Transverse colon (tissue), 4 donors: ENCODE measurements at regions of chr20 and their contacts with region 1.

Region 1: GRCh38 chr20:4607287-4607713 is 114.4 kb upstream of the PRND start:
- DNase-seq: peak; percentile 50
- H3K4me3 ChIP-seq: no peak overlapping the region
- H3K27ac ChIP-seq: no peak overlapping the region
- H3K4me1 ChIP-seq: peaks cover 0 to 31% (median 0%) of the 10 kb centered on the region in 4 donors
- H3K27me3 ChIP-seq: peaks cover 20% of the 10 kb centered on the region
- CTCF ChIP-seq: peak; percentile 92 to 99 (median 95)
- EP300 ChIP-seq: no peak
- POLR2A ChIP-seq: no peak

Region 2: DNA sequence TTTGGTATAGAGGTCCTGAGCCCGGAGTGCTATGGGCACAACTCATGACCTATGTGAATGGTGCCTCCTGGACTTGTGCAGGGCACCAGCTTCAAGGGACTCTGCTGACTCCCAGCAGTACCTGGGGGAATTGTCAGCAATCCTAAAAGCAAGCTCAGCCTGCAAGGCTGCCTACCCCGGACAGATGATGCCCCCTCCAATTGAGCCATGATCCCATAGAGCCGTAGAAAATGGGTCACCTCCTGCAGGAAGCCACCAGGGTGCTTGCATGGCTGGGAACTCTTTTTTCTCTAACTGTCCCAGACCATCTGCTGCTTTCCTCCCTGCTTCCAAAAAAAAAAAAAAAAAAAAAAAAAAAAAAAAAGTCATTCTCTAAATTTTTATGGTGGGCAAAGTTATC is 101.6 kb after region 1 on chr20:
- in situ Hi-C with region 1: no loop called
- intact Hi-C with region 1: no loop called
- DNase-seq: no peak
- H3K4me3 ChIP-seq: no peak overlapping the region
- H3K27ac ChIP-seq: no peak overlapping the region
- H3K4me1 ChIP-seq: peaks cover 0 to 2% (median 0%) of the 10 kb centered on the region in 4 donors
- H3K27me3 ChIP-seq: no peaks in the 10 kb centered on the region
- CTCF ChIP-seq: no peak
- EP300 ChIP-seq: no peak
- POLR2A ChIP-seq: no peak

Region 3: DNA sequence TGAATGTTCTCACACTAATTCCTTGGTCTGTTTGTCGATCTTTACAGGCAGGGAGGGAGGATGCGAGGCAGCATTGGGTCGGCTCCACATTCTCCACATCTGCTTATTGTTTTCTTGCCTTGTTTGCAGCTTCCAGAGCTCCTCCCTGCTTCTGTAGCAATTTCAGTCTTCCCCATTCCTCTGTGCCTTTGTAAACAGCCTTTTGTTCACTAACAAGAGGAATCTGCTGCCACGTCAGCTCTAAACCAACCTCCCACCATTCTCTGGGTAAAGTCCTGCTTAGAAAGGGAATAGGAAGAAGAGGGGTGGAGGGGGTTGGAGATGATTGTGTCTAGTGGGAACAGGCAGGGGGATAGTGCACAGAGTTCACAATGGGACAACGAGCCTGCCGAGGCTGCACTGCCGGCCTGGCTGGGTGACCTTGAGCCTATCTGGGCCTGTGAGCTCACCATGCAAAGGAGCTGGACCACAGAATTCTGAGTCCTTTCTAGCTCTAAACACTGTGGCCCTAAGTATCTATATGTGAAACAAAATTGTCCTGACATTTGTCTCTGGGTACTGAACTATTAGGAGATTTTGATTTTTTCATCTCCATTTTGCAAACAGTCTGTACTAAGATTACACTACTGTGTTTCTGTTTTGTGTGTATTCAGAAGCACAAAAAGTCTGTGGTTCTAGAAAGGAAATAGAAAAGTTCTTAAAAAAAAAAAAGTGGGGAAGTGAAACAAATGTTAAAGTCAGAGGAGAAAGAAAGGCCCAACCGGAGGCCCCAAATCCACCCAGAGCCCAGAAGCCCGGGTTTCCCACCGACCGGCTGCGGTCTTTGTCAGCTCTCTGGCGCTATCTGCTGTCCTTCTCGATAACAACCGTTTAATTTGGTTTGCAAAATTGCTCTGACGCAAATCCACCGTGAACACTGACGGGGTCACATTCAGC is 113.0 kb after region 1 on chr20:
- in situ Hi-C with region 1: loop called (anchors 5 to 10 kb)
- intact Hi-C with region 1: loop called (anchors 2 kb)
- DNase-seq: peak; percentile 83
- H3K4me3 ChIP-seq: no peak overlapping the region
- H3K27ac ChIP-seq: peak overlapping the region; percentile 56 to 81 (median 61)
- H3K4me1 ChIP-seq: peaks cover 0 to 4% (median 4%) of the 10 kb centered on the region in 4 donors
- H3K27me3 ChIP-seq: no peaks in the 10 kb centered on the region
- CTCF ChIP-seq: peak; percentile 64 to 81 (median 66)
- EP300 ChIP-seq: no peak
- POLR2A ChIP-seq: no peak

Region 4: DNA sequence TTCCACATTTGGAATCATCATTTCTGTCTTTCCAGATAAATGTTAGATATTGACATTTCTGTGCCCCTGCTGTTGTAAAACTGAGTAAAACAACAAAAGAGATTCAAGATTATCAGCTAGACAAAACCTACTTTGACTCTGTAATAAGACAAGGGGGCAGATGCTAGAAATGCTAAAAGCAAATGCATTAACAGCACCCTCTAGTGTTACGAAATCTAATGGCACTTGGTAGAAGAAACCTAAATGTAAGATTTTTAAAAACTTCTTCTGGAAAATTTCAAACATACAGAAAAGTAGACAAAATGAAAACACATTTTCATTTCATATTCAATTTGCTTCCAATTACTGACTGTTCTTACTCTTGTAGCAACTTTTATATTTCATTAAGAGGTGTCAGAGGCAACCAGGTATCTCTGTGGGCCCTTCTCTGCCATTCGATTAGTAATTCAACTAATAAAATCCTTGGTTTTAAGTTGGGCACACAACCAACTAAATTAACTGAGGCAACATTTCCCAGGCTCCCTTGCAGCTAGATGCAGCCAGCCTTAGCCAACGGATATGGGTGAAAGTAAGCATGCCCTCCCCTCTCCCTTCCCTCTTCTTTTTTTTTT is 349.0 kb after region 1 on chr20:
- in situ Hi-C with region 1: loop called in 1 of 4 experiments (anchors 25 kb)
- intact Hi-C with region 1: no loop called
- DNase-seq: no peak
- H3K4me3 ChIP-seq: no peak overlapping the region
- H3K27ac ChIP-seq: no peak overlapping the region
- H3K4me1 ChIP-seq: no peaks in the 10 kb centered on the region
- H3K27me3 ChIP-seq: no peaks in the 10 kb centered on the region
- CTCF ChIP-seq: peak; percentile 75 to 85 (median 77)
- EP300 ChIP-seq: no peak
- POLR2A ChIP-seq: no peak

Region 5: GRCh38 chr20:5078399-5078958 is 471.2 kb after region 1 on chr20:
- in situ Hi-C with region 1: loop called in 1 of 4 experiments (anchors 25 kb)
- intact Hi-C with region 1: no loop called
- DNase-seq: peak; percentile 83
- H3K4me3 ChIP-seq: peak overlapping the region in 3 of 4 donors; percentile 5 to 32 (median 24)
- H3K27ac ChIP-seq: peak overlapping the region; percentile 77 to 82 (median 80)
- H3K4me1 ChIP-seq: peaks cover 9 to 39% (median 24%) of the 10 kb centered on the region in 4 donors
- H3K27me3 ChIP-seq: no peaks in the 10 kb centered on the region
- CTCF ChIP-seq: no peak
- EP300 ChIP-seq: no peak
- POLR2A ChIP-seq: peak; percentile 38